HEK293 (cell line): ENCODE measurements at regions of chr1 and their contacts with region 1.

Region 1: GRCh38 chr1:2044510-2045319 is 5.5 kb upstream of the PRKCZ start:
- H3K4me3 ChIP-seq: no peak overlapping the region; the same call in 1 of the 2 replicates
- H3K27ac ChIP-seq: no peak overlapping the region; the same call in 1 of the 2 replicates
- H3K4me1 ChIP-seq: no peaks in the 10 kb centered on the region
- CTCF ChIP-seq: peak; percentile 72; the same call in 1 of the 2 replicates

Region 2: GRCh38 chr1:1489231-1489630 is 555.5 kb before region 1 on chr1:
- CTCF ChIA-PET with region 1: no interaction called
- POLR2A ChIA-PET with region 1: no interaction called
- H3K4me3 ChIP-seq: no peak overlapping the region
- H3K27ac ChIP-seq: no peak overlapping the region
- H3K4me1 ChIP-seq: no peaks in the 10 kb centered on the region
- CTCF ChIP-seq: no peak

Region 3: DNA sequence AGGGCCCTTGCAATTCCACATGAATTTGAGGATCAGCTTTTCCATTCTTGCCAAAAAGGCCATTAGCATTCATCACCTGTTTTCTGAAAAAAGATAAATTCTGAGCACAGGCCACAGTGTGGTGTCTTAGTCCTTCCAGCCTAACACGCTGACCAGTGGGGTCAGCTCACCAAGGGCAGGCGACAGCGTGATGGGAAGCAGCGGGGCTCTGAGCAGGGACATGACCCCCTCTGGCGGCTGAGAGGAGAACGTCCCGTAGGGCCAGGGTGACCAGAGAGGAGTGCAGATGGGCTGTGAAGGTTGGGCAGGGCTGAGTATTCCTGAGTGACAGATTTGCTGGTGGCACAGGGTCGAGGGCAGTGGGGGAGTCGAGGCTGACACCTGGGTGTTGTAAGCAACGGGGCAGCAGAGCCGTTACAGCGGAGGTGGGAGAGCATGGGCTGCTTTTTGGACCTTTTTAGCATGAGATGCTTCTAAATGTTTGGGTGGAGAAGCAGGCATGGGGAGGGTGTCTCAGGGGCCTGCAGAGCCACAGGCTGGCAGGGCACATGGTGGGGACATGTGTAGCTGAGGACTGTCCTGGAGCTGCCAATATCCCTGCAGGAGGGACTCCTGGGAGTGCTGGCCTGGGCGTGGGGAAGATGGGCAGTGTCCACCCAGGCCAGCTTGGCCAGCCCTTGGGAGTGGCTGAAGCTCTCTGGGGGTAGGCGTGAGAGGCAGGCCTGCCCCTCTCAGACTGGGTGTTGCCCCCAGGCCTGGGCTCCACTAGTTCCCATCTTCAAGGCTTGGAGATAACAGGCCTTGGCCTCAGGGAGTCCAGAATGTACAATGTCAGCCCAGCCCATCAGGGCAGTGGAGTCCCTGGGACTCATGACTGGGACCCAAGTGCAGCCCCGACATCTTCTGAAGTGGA is 138.3 kb before region 1 on chr1:
- CTCF ChIA-PET with region 1: interaction called, 16 read pairs
- POLR2A ChIA-PET with region 1: interaction called, 3 read pairs
- H3K4me3 ChIP-seq: no peak overlapping the region
- H3K27ac ChIP-seq: peak overlapping the region; percentile 82
- H3K4me1 ChIP-seq: no peaks in the 10 kb centered on the region; the same call in 1 of the 2 replicates
- CTCF ChIP-seq: peak; percentile 94

Region 4: DNA sequence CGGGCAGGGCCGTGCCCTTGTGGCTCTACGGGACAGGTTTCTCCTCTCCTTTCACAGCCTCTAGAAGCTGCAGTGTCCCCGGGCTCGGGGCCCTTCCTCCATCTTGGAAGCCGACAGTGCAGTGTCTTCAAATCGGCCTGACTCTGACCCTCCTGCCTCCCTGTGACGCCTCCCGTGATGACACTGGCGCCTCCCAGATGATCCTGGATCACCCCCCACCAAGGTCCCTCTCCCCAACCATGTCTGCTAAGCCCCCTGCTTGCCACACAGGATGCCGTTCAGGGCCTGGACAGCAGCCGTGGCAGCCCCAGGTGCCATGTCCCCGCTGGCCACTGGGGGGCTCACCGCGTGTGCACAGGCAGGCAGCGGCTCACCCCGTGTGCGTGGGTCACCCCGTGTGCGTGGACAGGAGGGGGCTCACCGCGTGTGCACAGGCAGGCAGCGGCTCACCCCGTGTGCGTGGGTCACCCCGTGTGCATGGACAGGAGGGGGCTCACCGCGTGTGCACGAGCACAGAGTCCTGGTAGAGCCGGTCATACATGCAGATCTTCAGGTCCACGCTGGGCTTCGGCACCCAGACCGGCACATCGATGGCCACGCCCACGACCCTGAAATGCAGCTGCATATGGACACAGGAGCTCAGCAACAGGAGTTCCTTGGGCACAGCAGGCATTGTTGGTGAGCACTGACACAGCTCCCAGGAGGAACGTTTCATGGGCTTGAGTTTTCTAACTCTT is 100.7 kb before region 1 on chr1:
- CTCF ChIA-PET with region 1: interaction called, 52 read pairs
- POLR2A ChIA-PET with region 1: no interaction called
- H3K4me3 ChIP-seq: peak overlapping the region; percentile 44
- H3K27ac ChIP-seq: no peak overlapping the region
- H3K4me1 ChIP-seq: no peaks in the 10 kb centered on the region
- CTCF ChIP-seq: peak; percentile 97

Region 5: DNA sequence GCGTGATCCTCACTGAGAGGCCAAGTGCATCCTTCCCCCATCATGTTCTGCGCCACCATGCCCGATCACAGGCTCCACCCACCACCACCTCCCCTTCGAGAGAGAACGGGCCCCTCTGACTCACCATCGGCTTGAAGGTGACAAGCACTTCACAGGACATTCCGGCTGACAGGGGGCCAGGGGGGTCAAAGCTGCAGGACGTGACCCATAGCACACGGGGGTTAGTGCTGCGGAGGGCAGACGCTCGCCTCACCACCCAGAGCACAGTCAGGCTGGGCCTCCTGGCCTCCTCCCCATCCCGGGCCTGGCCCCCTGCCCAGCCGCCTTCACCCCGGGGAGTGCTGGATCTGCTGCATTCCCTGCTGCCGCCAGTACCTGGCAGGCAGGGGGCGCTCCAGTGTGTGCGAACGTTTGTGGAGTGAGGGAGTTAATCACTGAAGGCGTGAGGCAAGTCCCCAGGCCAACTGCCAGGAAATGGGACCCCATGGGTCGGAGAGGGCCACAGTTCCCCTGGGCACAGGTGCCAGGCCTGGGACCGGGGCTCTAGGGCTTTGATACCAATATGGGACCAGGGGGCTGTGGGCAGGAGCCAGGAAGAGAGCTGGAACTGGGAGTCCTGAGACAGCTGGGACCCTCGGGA is 84.8 kb before region 1 on chr1:
- CTCF ChIA-PET with region 1: interaction called, 118 read pairs
- POLR2A ChIA-PET with region 1: interaction called, 5 read pairs
- H3K4me3 ChIP-seq: peak overlapping the region; percentile 6
- H3K27ac ChIP-seq: no peak overlapping the region
- H3K4me1 ChIP-seq: no peaks in the 10 kb centered on the region
- CTCF ChIP-seq: peak; percentile 92

Region 6: GRCh38 chr1:2016123-2016522 is 28.6 kb before region 1 on chr1:
- CTCF ChIA-PET with region 1: interaction called, 10 read pairs
- POLR2A ChIA-PET with region 1: interaction called, 3 read pairs
- H3K4me3 ChIP-seq: no peak overlapping the region
- H3K27ac ChIP-seq: no peak overlapping the region
- H3K4me1 ChIP-seq: no peaks in the 10 kb centered on the region
- CTCF ChIP-seq: no peak

Region 7: DNA sequence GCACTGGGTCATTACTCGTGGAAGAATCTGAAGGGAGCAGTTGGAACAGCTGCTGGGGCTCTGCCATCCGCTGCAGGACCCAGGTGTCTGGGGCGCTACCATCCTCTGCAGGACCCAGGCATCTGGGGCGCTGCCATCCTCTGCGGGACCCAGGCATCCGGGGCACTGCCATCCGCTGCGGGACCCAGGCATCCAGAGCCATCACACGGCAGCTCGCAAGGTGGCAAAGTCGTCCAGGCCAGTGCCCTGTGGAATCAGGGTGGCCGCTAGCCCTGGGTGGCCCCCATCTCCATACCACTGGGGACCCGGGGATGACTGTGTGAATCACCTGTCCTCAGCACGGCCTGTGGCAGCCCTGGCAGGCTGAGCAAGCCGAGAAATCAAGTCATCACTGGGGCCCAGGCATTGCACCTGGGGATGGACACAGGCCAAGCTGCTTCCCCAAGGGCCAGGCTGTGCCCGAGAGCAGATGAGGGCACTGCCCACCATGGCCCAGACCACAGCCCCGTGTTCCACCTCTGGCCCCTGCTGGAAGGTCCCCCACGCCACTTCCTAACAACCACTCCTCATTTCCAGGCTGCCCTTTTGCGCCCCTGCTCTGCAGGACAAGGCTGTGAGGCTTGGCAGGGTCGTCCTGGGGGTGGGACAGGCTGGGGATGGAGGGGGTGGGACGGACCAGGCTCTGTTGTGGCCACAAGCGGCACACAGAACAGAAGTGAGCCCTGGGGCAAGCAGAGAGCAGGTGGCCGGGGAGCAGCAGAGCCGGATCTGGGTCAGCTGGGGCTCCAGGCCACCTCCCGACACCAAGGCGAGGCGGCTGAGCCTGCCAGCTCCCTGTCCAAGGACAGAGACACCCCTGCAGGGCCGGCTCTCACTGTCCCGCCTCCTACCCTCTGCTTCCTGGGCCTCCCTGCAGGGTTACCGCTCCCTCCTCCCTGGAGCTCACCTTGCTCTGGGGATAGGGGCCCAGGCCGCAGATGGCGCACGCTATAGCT is 12.9 kb before region 1 on chr1:
- CTCF ChIA-PET with region 1: interaction called, 35 read pairs
- POLR2A ChIA-PET with region 1: no interaction called
- H3K4me3 ChIP-seq: no peak overlapping the region
- H3K27ac ChIP-seq: no peak overlapping the region
- H3K4me1 ChIP-seq: no peaks in the 10 kb centered on the region
- CTCF ChIP-seq: no peak

Region 8: DNA sequence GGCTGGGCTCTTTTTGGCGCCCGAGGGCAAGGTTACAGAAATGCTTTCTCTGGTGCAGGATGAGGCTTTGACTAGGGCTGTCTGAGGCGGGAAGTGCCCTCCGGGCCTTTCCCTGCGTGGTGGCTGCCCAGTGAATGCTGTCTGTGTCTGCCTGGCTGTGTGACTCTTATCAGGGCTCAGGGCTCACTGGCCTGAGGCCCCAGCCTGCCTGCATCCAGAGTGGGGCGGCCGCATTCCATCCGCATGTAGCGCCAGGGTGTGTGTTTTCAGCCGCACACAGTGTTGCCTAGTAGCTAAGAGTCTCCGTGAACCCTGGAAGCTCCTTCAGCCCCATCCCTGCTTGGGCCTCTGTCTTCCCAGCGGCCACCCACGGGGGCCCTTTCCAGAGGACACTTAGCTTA is 90.7 kb after region 1 on chr1:
- CTCF ChIA-PET with region 1: interaction called, 11 read pairs
- POLR2A ChIA-PET with region 1: no interaction called
- H3K4me3 ChIP-seq: no peak overlapping the region
- H3K27ac ChIP-seq: no peak overlapping the region
- H3K4me1 ChIP-seq: peaks cover 3% of the 10 kb centered on the region
- CTCF ChIP-seq: no peak